ENCODE measurements at regions of chr10 and their contacts with region 1.

Region 1: DNA sequence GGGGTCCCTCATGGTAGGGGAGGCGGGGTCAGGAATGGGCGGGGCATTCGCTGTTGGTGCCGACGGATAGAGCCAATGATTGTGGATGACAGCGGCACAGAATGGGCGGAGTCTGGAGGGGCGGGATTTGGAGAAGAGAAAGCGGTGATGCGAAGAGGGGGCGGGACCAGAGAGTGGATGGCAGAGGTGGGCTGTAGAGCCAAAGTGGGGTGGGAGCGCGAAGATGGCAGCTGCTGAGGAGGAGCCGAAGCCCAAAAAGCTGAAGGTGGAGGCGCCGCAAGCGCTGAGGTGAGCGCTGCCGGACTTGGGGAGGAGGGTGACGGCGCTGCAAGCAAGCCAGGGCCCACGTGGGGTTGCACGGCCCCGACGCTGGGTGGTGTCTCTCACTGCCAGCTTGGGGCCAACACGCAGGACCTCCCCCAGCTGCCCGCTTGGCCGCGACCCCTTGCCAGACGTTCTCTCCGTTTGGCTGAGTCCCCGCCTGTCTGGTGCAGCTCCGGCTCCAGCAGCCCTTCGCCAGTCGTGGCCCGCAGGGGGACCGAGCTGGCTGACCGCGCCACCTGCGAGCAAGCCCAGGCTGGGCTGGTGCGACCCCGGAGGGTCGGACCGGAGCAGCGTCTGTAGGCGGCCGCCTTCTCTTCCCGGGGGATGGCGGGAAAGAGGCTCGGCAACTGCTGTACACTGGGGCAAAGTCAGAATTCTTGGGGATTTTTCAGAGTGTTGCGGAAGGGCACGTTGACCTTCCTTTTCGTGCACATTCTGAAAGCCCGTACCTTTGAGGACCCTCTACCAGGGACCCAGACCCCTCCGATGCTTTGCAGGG is at the start of gene ADK:
- DNase-seq: peak; percentile 95 to 99 (median 97)
- H3K4me3 ChIP-seq: peak within 1 kb of the TSS; percentile 59 to 99 (median 86)
- H3K4me3 Mint-ChIP-seq: no peak within 1 kb of the TSS
- H3K27ac ChIP-seq: peak within 1 kb of the TSS; percentile 77 to 99
- H3K27ac Mint-ChIP-seq: no peak within 1 kb of the TSS
- H3K4me1 ChIP-seq: peaks cover 29 to 32% of the 10 kb centered on the region in 2 donors
- H3K4me1 Mint-ChIP-seq: peaks cover 38% of the 10 kb centered on the region
- H3K27me3 ChIP-seq: no peaks in the 10 kb centered on the region
- H3K27me3 Mint-ChIP-seq: peaks cover 0 to 4% (median 0%) of the 10 kb centered on the region in 3 donors
- CTCF ChIP-seq: peak; percentile 34
- polyA plus RNA-seq, gene ADK: 6.4 to 38.2 (median 35.7) TPM

Region 2: DNA sequence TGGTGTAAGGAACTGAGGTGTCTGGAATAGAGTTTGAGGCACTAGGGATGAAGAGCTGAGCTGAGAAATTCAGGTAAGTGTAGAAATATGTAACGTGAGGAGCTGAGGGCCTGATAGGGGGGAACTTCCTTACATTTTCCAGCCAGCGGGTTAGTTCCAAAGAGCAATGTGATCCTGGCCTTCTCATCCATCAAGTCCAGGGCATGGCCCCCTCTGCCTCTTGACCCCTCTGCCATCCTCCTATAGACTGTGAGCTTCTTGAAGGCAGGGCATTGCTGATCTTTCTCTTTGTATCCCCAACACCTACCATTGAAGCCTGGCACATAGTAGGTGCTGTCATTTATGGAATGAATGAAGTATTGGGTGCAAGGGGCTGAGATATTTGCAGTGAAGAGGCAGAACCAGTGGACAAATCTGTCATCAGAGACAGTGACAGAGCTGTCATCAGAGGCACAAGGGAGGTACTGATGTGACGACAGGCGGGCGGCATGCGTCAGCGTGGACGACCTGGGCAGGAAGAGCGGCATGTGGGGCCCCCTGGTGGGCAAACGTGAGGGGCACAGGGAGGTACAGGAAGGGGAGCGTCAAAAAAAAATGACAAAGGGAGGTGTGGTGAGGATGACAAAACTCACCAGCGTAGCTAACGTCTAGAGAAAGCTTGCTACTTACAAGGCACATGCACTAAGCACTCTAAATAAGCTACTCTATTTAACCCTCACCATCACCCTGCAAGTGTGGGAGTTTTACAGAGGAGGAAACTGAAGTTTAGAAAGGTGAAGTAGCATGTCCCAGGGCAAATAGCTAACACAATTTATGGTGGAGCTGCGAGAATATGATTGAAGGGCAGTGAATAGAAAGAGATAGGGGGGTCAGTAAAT is 271.7 kb before region 1 on chr10:
- intact Hi-C with region 1: loop called in 1 of 2 experiments (anchors 5 kb)
- DNase-seq: peak; percentile 91 to 97 (median 97)
- H3K4me3 ChIP-seq: no peak overlapping the region
- H3K4me3 Mint-ChIP-seq: no peak overlapping the region
- H3K27ac ChIP-seq: peak overlapping the region in 1 of 2 donors; percentile 64
- H3K27ac Mint-ChIP-seq: peak overlapping the region; percentile 55 to 90 (median 85)
- H3K4me1 ChIP-seq: peaks cover 19 to 26% of the 10 kb centered on the region in 2 donors
- H3K4me1 Mint-ChIP-seq: peaks cover 25% of the 10 kb centered on the region
- H3K27me3 ChIP-seq: no peaks in the 10 kb centered on the region
- H3K27me3 Mint-ChIP-seq: peaks cover 0 to 1% (median 0%) of the 10 kb centered on the region in 3 donors
- CTCF ChIP-seq: peak; percentile 86

Region 3: DNA sequence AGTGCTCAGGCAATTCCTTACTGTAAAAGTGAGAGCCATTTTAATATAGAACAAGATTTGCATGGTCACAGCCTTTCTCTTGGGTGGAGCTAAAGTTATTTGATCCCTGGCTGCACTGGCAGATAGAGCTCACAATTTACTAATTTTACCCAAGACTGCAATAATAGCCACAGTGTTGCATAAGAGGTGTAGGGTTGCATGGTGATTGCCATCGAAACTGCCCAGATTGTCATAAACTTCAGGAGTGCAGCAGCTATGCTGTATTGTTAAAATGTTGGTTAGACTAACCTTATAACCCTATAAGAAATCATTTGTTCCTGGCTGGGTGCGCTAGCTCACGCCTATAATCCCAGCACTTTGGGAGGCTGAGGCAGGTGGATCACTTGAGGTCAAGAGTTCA is 103.4 kb before region 1 on chr10:
- intact Hi-C with region 1: no loop called
- DNase-seq: peak; percentile 24 to 32 (median 29)
- H3K4me3 ChIP-seq: peak overlapping the region in 1 of 3 experiments; percentile 31
- H3K4me3 Mint-ChIP-seq: peak overlapping the region in 1 of 2 donors; percentile 62
- H3K27ac ChIP-seq: peak overlapping the region; percentile 61 to 65
- H3K27ac Mint-ChIP-seq: peak overlapping the region; percentile 35 to 89 (median 80)
- H3K4me1 ChIP-seq: peaks cover 38 to 40% of the 10 kb centered on the region in 2 donors
- H3K4me1 Mint-ChIP-seq: peaks cover 53% of the 10 kb centered on the region
- H3K27me3 ChIP-seq: no peaks in the 10 kb centered on the region
- H3K27me3 Mint-ChIP-seq: no peaks in the 10 kb centered on the region
- CTCF ChIP-seq: no peak

Region 4: GRCh38 chr10:74103560-74104248 is 47.6 kb before region 1 on chr10:
- intact Hi-C with region 1: no loop called
- DNase-seq: no peak
- H3K4me3 ChIP-seq: no peak overlapping the region
- H3K4me3 Mint-ChIP-seq: no peak overlapping the region
- H3K27ac ChIP-seq: no peak overlapping the region
- H3K27ac Mint-ChIP-seq: peak overlapping the region in 1 of 7 donors; percentile 41
- H3K4me1 ChIP-seq: no peaks in the 10 kb centered on the region
- H3K4me1 Mint-ChIP-seq: no peaks in the 10 kb centered on the region
- H3K27me3 ChIP-seq: no peaks in the 10 kb centered on the region
- H3K27me3 Mint-ChIP-seq: peaks cover 0 to 2% (median 0%) of the 10 kb centered on the region in 3 donors
- CTCF ChIP-seq: no peak

Region 5: DNA sequence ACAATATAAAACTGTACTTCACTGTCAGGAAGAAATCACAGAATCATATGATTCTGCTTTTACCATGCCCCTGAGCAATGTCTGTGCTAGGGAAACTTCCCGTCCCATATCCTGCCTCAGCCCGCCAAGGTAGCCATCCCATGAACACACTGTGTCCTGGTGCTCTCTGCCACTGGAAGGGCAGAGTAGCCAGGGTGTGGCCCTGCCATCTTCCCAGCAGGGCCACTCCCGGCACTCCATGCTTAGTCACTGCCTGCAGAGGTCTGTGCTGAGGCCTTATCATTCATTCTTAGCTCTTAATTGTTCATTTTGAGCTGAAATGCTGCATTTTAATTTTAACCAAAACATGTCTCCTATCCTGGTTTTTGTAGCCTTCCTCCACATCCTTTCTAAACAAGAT is 32.5 kb before region 1 on chr10:
- intact Hi-C with region 1: no loop called
- DNase-seq: no peak
- H3K4me3 ChIP-seq: no peak overlapping the region
- H3K4me3 Mint-ChIP-seq: no peak overlapping the region
- H3K27ac ChIP-seq: peak overlapping the region in 1 of 2 donors; percentile 48
- H3K27ac Mint-ChIP-seq: peak overlapping the region in 3 of 7 donors; percentile 50 to 71 (median 66)
- H3K4me1 ChIP-seq: no peaks in the 10 kb centered on the region
- H3K4me1 Mint-ChIP-seq: no peaks in the 10 kb centered on the region
- H3K27me3 ChIP-seq: no peaks in the 10 kb centered on the region
- H3K27me3 Mint-ChIP-seq: no peaks in the 10 kb centered on the region
- CTCF ChIP-seq: no peak

Region 6: DNA sequence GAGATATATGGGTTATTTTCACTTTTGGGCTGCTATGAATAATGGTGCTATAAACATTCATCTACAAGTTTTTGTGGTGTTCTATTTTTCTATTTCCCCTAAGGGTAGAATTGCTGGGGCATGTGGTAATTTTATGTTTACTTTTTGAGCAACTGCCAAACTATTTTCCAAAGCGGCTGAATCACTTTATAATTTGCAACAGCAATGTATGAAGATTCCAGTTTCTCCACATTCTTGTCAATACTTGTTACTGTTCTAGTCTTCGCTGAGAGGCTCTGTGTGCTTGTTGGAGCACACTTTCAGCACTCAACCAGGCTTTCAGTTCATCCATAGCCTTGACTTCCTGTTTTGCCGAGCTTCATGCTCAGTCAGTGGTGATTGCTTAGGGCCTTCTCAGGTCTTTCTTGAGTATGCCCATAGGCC is 38.7 kb after region 1 on chr10:
- intact Hi-C with region 1: loop called in 1 of 2 experiments (anchors 5 kb)
- DNase-seq: peak; percentile 36 to 67 (median 61)
- H3K4me3 ChIP-seq: peak overlapping the region in 2 of 3 experiments; percentile 12 to 54
- H3K4me3 Mint-ChIP-seq: peak overlapping the region; percentile 27 to 69
- H3K27ac ChIP-seq: peak overlapping the region; percentile 27 to 83
- H3K27ac Mint-ChIP-seq: peak overlapping the region; percentile 70 to 92 (median 81)
- H3K4me1 ChIP-seq: peaks cover 25 to 29% of the 10 kb centered on the region in 2 donors
- H3K4me1 Mint-ChIP-seq: peaks cover 44% of the 10 kb centered on the region
- H3K27me3 ChIP-seq: no peaks in the 10 kb centered on the region
- H3K27me3 Mint-ChIP-seq: peaks cover 0 to 1% (median 0%) of the 10 kb centered on the region in 3 donors
- CTCF ChIP-seq: no peak

Region 7: DNA sequence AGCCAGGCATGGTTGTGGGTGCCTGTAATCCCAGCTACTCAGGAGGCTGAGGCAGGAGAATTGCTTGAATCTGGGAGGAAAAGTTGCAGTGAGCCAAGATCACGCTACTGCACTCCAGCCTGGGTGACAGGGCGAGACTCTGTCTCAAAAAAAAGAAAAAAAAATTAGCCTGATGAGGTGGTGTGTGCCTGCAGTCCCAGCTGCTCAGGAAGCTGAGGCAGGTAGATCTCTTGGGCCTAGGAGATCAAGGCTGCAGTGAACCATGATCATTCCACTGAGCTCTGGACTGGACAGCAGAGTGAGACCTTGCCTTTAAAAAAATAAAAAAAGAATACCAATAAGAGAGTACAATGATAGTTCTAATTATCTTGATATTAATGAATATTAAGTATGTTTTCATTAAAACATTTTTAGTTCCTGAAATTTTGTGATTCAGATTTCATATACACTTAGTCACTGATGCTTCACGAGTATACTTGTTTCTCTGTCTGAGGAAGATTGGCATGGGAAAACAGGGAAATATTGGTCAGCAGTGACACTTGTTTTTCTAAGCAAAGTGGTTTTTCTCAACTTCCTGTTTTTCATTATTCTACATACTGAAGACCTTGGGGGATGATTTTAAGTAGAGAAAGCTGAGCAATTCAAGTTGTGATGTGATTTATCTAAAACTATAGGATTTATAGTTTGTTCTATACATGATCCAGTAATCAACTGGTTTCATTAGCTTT is 76.6 kb after region 1 on chr10:
- intact Hi-C with region 1: loop called (anchors 5 kb)
- DNase-seq: peak; percentile 84 to 94 (median 92)
- H3K4me3 ChIP-seq: peak overlapping the region in 1 of 3 experiments; percentile 20
- H3K4me3 Mint-ChIP-seq: peak overlapping the region in 1 of 2 donors; percentile 74
- H3K27ac ChIP-seq: peak overlapping the region; percentile 58 to 89
- H3K27ac Mint-ChIP-seq: peak overlapping the region; percentile 90 to 98 (median 94)
- H3K4me1 ChIP-seq: peaks cover 8 to 17% of the 10 kb centered on the region in 2 donors
- H3K4me1 Mint-ChIP-seq: peaks cover 13% of the 10 kb centered on the region
- H3K27me3 ChIP-seq: no peaks in the 10 kb centered on the region
- H3K27me3 Mint-ChIP-seq: no peaks in the 10 kb centered on the region
- CTCF ChIP-seq: no peak

Region 8: GRCh38 chr10:74234569-74234968 is 83.3 kb after region 1 on chr10:
- intact Hi-C with region 1: loop called (anchors 5 kb)
- DNase-seq: no peak
- H3K4me3 ChIP-seq: no peak overlapping the region
- H3K4me3 Mint-ChIP-seq: no peak overlapping the region
- H3K27ac ChIP-seq: no peak overlapping the region
- H3K27ac Mint-ChIP-seq: no peak overlapping the region
- H3K4me1 ChIP-seq: peaks cover 10 to 14% of the 10 kb centered on the region in 2 donors
- H3K4me1 Mint-ChIP-seq: peaks cover 14% of the 10 kb centered on the region
- H3K27me3 ChIP-seq: no peaks in the 10 kb centered on the region
- H3K27me3 Mint-ChIP-seq: no peaks in the 10 kb centered on the region
- CTCF ChIP-seq: peak; percentile 55

Region 9: GRCh38 chr10:74826142-74827044 is 675.1 kb after region 1 on chr10 and contains the start of gene KAT6B:
- intact Hi-C with region 1: loop called (anchors 10 kb)
- DNase-seq: peak; percentile 100
- H3K4me3 ChIP-seq: peak within 1 kb of the TSS; percentile 77 to 95 (median 88)
- H3K4me3 Mint-ChIP-seq: peak within 1 kb of the TSS; percentile 88 to 93
- H3K27ac ChIP-seq: peak within 1 kb of the TSS; percentile 79 to 90
- H3K27ac Mint-ChIP-seq: peak within 1 kb of the TSS; percentile 94 to 99 (median 98)
- H3K4me1 ChIP-seq: peaks cover 27 to 47% of the 10 kb centered on the region in 2 donors
- H3K4me1 Mint-ChIP-seq: peaks cover 49% of the 10 kb centered on the region
- H3K27me3 ChIP-seq: no peaks in the 10 kb centered on the region
- H3K27me3 Mint-ChIP-seq: peaks cover 0 to 4% (median 0%) of the 10 kb centered on the region in 3 donors
- CTCF ChIP-seq: no peak
- polyA plus RNA-seq, gene KAT6B: 3.3 to 6.4 (median 6.2) TPM

Measured in CD14-positive monocyte (primary cell).